Right cardiac atrium (tissue), 5 donors: ENCODE measurements at regions of chr7 and their contacts with region 1.

Region 1: DNA sequence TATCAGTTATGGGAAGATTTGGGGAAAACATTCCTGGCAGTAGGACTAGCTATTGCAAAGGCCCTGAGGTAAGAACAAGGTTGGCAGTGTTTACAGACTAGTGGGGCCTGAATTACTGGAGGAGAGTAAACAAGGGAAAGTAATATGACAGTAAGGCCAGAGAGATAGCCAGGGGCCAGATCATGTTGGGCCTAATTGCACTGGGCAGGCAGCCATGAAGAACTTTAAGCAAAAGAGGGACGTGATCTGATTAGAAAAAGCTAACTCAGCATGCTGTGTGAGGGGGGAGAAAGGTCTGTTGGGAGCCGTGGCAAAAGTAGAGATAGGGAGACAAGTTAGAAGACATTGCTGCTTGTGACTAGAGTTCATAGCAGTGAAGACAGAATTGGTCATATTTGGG is 9.2 kb downstream of the NUP42 start:
- DNase-seq: no peak
- ATAC-seq: no peak
- H3K4me3 ChIP-seq: no peak overlapping the region
- H3K27ac ChIP-seq: no peak overlapping the region
- H3K4me1 ChIP-seq: no peaks in the 10 kb centered on the region
- H3K27me3 ChIP-seq: no peaks in the 10 kb centered on the region

Region 2: DNA sequence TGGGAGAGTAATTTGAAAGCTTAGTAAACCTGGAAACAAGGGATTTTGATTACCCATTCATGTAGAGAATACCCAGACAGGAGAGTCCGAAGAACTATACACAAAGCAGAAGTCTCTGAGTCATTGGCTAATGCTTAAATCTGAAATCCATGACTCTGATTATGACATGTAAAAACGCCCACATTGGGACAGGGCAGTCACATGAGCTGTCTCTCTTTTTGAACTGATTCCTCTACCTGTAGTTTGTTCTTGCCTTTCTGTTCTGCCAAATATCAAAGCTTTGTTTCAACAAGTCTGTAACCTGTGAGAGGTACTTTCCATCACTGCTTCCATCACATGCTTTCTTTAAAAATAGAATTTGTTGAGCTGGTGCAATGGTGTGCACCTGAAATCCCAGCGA is 51.3 kb after region 1 on chr7:
- intact Hi-C with region 1: loop called in 3 of 4 experiments (anchors 5 to 10 kb)
- DNase-seq: no peak
- ATAC-seq: no peak
- H3K4me3 ChIP-seq: no peak overlapping the region
- H3K27ac ChIP-seq: no peak overlapping the region
- H3K4me1 ChIP-seq: no peaks in the 10 kb centered on the region
- H3K27me3 ChIP-seq: no peaks in the 10 kb centered on the region

Region 3: DNA sequence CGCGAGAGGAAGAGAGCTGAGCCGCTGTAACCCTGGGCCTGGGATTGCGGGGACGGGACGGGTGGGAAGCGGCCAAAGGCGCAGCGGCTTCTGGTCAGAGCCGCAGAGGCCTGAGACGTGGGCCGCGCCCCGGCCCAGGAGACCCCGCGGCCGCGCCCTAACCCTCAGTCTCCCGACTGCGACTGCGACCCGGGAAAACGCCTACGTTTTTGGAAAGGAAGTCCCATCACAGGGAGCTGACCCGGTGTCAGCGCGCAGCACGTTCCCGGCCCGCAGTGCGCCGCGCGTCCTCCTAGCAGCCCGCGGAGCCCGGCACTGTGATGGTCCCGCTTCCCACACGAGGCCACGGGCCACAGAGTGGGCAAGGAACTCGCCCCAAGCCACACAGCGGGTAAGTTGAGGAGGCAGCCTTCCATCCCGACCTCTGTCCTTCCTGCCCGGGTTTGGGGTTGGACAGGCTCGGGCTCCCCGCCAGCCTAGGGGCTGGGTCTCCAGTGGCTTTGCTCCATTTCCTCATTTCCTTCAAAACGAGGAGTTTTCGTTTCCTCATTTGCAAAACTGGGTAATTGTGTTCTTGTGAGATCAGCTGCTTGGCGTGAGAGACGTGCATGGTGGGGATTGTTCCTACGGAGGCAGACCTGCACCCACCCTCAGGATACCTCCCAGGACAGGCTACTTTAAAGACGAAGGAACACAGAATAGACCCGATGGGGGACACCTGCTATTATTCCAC is 56.7 kb after region 1 on chr7:
- intact Hi-C with region 1: loop called in 3 of 4 experiments (anchors 5 to 10 kb)
- DNase-seq: peak; percentile 56 to 87 (median 84)
- ATAC-seq: peak; percentile 84 to 90
- H3K4me3 ChIP-seq: peak overlapping the region; percentile 39
- H3K27ac ChIP-seq: peak overlapping the region; percentile 70
- H3K4me1 ChIP-seq: no peaks in the 10 kb centered on the region
- H3K27me3 ChIP-seq: no peaks in the 10 kb centered on the region

Region 4: GRCh38 chr7:23377134-23377533 is 186.1 kb after region 1 on chr7:
- intact Hi-C with region 1: no loop called
- DNase-seq: no peak
- ATAC-seq: no peak
- H3K4me3 ChIP-seq: no peak overlapping the region
- H3K27ac ChIP-seq: no peak overlapping the region
- H3K4me1 ChIP-seq: no peaks in the 10 kb centered on the region
- H3K27me3 ChIP-seq: no peaks in the 10 kb centered on the region

Region 5: GRCh38 chr7:23462846-23463245 is 271.8 kb after region 1 on chr7:
- intact Hi-C with region 1: no loop called
- DNase-seq: no peak
- ATAC-seq: peak; percentile 83 to 87
- H3K4me3 ChIP-seq: no peak overlapping the region
- H3K27ac ChIP-seq: no peak overlapping the region
- H3K4me1 ChIP-seq: no peaks in the 10 kb centered on the region
- H3K27me3 ChIP-seq: peaks cover 7% of the 10 kb centered on the region